Calu3 (cell line): ENCODE measurements at regions of chr3 and their contacts with region 1.

Region 1: DNA sequence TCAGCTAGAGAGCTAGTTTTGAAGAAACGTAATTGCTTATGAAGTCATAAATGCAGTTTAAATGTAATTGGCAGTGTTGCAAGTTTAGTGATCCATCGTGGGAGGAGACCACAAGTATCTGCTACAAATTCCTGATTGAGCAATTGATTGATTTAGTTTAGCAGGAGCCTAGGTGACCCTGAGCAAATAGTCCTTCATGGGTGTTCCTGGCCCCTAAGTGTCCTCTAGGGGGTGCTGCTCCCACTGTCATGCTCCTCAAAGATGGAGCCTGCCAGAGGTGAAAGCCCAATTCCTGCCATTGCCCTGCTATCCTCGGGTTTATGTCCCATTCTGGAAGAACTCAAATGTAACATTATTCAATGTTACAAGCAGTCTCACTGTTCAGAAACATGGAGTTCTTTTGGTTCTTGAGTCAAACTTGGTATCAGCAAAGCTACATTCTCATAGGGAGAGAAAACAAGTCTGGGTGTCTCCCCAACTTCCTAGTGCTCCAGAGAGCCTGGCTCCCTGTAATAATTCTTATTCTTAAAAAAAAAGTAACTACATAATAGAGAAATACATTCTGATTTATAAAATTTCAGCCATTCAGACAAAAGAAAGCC is 29.8 kb upstream of the SENP5 start:
- DNase-seq: peak; percentile 58
- H3K4me3 Mint-ChIP-seq: no peak overlapping the region
- H3K27ac Mint-ChIP-seq: no peak overlapping the region
- H3K4me1 Mint-ChIP-seq: no peaks in the 10 kb centered on the region
- H3K27me3 Mint-ChIP-seq: no peaks in the 10 kb centered on the region
- CTCF ChIP-seq: peak; percentile 52

Region 2: GRCh38 chr3:196942226-196942914 is 104.5 kb after region 1 on chr3 and contains the start of gene NCBP2:
- CTCF ChIA-PET with region 1: no interaction called
- intact Hi-C with region 1: loop called (anchors 5 kb)
- DNase-seq: peak; percentile 99
- H3K4me3 Mint-ChIP-seq: peak within 1 kb of the TSS; percentile 96
- H3K27ac Mint-ChIP-seq: peak within 1 kb of the TSS; percentile 97
- H3K4me1 Mint-ChIP-seq: peaks cover 9% of the 10 kb centered on the region
- H3K27me3 Mint-ChIP-seq: no peaks in the 10 kb centered on the region
- CTCF ChIP-seq: peak; percentile 52
- total RNA-seq, gene NCBP2: 67.1 and 71.5 TPM in 2 replicates